Activated CD4-positive, alpha-beta T cell treated with anti-CD3 and anti-CD28 coated beads, Interleukin-2, amount 10 ng/mL, durations not matched to agents 24 days and 14 days (primary cell): ENCODE measurements at regions of chr11 and their contacts with region 1.

Region 1: GRCh38 chr11:110453684-110454354 is 24.1 kb downstream of the FDX1 start:
- DNase-seq: no peak
- H3K4me3 Mint-ChIP-seq: peak overlapping the region; percentile 47
- H3K27ac Mint-ChIP-seq: peak overlapping the region; percentile 43
- H3K4me1 Mint-ChIP-seq: peaks cover 39% of the 10 kb centered on the region
- H3K27me3 Mint-ChIP-seq: no peaks in the 10 kb centered on the region

Region 2: DNA sequence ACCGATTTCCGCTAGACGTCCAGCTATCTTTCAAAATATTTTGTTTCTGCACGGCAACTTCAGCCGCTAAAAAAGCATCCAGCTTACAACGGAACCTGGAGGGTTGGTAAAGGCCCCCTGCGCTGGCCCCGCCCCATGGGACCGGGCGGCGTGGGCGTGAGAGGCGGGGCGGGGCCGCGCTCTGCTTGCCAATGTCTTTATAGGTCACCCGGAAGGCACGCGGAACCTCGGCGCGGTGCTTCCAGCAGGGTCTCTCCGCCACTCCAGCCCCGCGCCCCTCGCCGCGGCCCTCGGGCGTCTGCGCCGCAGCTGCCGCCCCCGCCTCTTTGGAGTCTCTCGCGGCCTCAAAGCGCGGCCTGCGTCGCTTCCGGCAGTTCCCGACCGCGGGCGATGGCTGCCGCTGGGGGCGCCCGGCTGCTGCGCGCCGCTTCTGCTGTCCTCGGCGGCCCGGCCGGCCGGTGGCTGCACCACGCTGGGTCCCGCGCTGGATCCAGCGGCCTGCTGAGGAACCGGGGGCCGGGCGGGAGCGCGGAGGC is 24.0 kb before region 1 on chr11 and contains the start of gene FDX1:
- intact Hi-C with region 1: loop called (anchors 2 kb)
- DNase-seq: peak; percentile 95
- H3K4me3 Mint-ChIP-seq: peak within 1 kb of the TSS; percentile 99
- H3K27ac Mint-ChIP-seq: peak within 1 kb of the TSS; percentile 98
- H3K4me1 Mint-ChIP-seq: peaks cover 39% of the 10 kb centered on the region
- H3K27me3 Mint-ChIP-seq: no peaks in the 10 kb centered on the region
- total RNA-seq, gene FDX1: 14.2 and 16.4 TPM in 2 replicates

Region 3: GRCh38 chr11:110529043-110529442 is 75.2 kb after region 1 on chr11:
- intact Hi-C with region 1: no loop called
- DNase-seq: no peak
- H3K4me3 Mint-ChIP-seq: no peak overlapping the region
- H3K27ac Mint-ChIP-seq: no peak overlapping the region
- H3K4me1 Mint-ChIP-seq: peaks cover 9% of the 10 kb centered on the region
- H3K27me3 Mint-ChIP-seq: peaks cover 2% of the 10 kb centered on the region

Region 4: GRCh38 chr11:110711776-110712658 is 258.2 kb after region 1 on chr11 and contains the start of gene ARHGAP20:
- intact Hi-C with region 1: loop called (anchors 10 kb)
- DNase-seq: peak; percentile 82
- H3K4me3 Mint-ChIP-seq: peak within 1 kb of the TSS; percentile 65
- H3K27ac Mint-ChIP-seq: no peak within 1 kb of the TSS
- H3K4me1 Mint-ChIP-seq: peaks cover 14% of the 10 kb centered on the region
- H3K27me3 Mint-ChIP-seq: peaks cover 60% of the 10 kb centered on the region
- total RNA-seq, gene ARHGAP20: not detected in 2 replicates

Region 5: DNA sequence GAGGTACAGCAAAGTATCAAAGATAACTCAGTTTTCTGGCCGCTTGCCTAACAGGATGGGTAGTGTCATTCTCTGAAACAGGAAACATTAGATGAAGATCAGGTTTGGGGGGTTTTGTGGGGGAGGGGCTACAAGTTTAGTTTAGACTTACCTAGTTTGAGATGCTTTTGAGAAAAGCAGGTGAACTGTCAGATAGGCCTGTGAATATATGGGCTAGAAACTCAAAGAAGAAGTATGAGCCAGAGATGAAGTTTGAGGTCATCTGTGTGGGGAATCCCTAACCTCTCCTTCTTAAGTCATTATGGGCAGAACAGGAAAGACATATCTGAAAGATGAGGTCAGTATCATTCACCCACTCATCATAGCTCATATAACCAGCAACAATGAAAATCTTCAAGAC is 1072.7 kb after region 1 on chr11:
- intact Hi-C with region 1: loop called (anchors 10 kb)
- DNase-seq: no peak
- H3K4me3 Mint-ChIP-seq: peak overlapping the region; percentile 30
- H3K27ac Mint-ChIP-seq: peak overlapping the region; percentile 59
- H3K4me1 Mint-ChIP-seq: peaks cover 40% of the 10 kb centered on the region
- H3K27me3 Mint-ChIP-seq: no peaks in the 10 kb centered on the region